Endothelial cell of umbilical vein (primary cell): ENCODE measurements at regions of chr20 and their contacts with region 1.

Region 1: GRCh38 chr20:30376767-30377666 is 880.4 kb upstream of the DEFB115 start:
- DNase-seq: peak; percentile 85
- H3K4me3 ChIP-seq: peak overlapping the region; percentile 48 to 77 (median 65)
- H3K27ac ChIP-seq: peak overlapping the region; percentile 30
- H3K4me1 ChIP-seq: peaks cover 3% of the 10 kb centered on the region
- H3K27me3 ChIP-seq: no peaks in the 10 kb centered on the region
- CTCF ChIP-seq: peak; percentile 44 to 78
- POLR2A ChIP-seq: peak; percentile 71

Region 2: DNA sequence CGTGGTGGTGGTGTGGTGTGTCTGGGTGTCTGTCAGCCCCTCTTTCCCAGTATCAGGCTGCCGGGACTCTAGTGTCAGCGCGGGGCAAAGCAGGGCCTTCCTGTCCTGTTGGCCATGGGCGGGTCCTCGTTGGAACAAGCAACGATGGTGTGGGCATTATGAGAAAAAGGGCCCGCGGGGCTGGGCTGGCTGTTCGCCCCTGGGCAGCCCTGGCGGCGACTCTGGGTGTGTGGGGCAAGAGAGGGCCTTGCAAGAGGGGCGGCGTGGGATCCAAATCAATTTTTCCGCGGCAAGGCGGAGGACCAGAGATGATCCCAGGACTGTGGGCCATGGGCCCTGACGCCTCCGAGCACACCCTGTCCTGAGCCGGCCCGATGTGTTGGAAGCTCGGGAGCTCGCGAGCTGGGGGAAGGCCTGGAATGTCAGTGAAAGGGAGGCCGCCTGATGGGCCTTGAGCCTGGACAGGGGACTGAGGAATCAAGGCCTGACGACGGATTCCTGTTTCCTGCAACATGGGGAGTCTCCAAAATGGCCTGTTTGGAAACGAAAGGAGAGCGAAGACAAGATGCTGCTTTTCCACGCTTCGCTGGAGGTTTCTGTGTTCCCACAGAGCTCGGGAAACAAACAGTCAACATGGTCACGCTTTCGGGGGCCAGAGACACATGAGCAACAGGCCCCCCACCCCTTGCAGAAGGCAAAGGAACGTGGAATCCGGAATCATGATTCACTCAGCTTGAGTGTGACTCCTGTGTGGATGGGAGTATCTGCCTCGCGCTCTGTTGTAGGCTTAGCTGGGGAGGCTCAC is 515.7 kb after region 1 on chr20:
- CTCF ChIA-PET with region 1: no interaction called
- POLR2A ChIA-PET with region 1: interaction called, 10 read pairs
- dilution Hi-C with region 1: no loop called
- intact Hi-C with region 1: no loop called
- DNase-seq: no peak
- H3K4me3 ChIP-seq: no peak overlapping the region
- H3K27ac ChIP-seq: no peak overlapping the region
- H3K4me1 ChIP-seq: no peaks in the 10 kb centered on the region
- H3K27me3 ChIP-seq: no peaks in the 10 kb centered on the region
- CTCF ChIP-seq: no peak
- POLR2A ChIP-seq: no peak